Naive thymus-derived CD4-positive, alpha-beta T cell (primary cell): ENCODE measurements at regions of chr7 and their contacts with region 1.

Region 1: GRCh38 chr7:142323706-142324105 is 65.8 kb upstream of the PRSS58 start:
- DNase-seq: peak in 5 of 9 donors; percentile 25 to 44 (median 41)
- ATAC-seq: peak; percentile 40
- H3K4me3 ChIP-seq: no peak overlapping the region
- H3K4me3 Mint-ChIP-seq: peak overlapping the region in 7 of 10 donors; percentile 4 to 65 (median 54)
- H3K27ac ChIP-seq: peak overlapping the region; percentile 34
- H3K27ac Mint-ChIP-seq: peak overlapping the region; percentile 17 to 96 (median 80)
- H3K4me1 ChIP-seq: peaks cover 0 to 24% of the 10 kb centered on the region in 2 donors
- H3K4me1 Mint-ChIP-seq: peaks cover 5 to 51% (median 34%) of the 10 kb centered on the region in 7 donors
- H3K27me3 ChIP-seq: no peaks in the 10 kb centered on the region
- H3K27me3 Mint-ChIP-seq: peaks cover 0 to 23% (median 4%) of the 10 kb centered on the region in 5 donors

Region 2: DNA sequence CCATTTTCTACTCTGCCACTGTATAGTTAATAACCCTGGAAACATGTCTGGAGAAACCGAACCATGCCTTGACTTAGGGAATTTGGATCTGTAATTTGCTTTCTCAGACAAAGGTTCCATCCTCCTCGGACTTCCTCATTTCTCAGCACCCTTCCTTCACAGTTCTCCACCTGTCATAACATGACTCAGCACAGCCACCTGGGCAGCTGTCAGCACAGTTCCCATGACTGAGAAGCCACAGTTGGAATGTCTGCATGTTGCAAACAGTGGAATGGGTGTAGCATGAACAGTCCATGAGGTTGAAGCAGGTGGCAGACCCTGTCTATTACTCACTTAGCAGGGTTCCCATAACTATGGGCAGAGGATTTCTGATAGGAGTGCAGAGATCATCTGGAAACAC is 408.1 kb before region 1 on chr7:
- CTCF ChIA-PET with region 1: no interaction called
- POLR2A ChIA-PET with region 1: no interaction called
- intact Hi-C with region 1: no loop called
- DNase-seq: no peak
- ATAC-seq: no peak
- H3K4me3 ChIP-seq: no peak overlapping the region
- H3K4me3 Mint-ChIP-seq: no peak overlapping the region
- H3K27ac ChIP-seq: no peak overlapping the region
- H3K27ac Mint-ChIP-seq: no peak overlapping the region
- H3K4me1 ChIP-seq: no peaks in the 10 kb centered on the region
- H3K4me1 Mint-ChIP-seq: peaks cover 0 to 4% (median 0%) of the 10 kb centered on the region in 7 donors
- H3K27me3 ChIP-seq: no peaks in the 10 kb centered on the region
- H3K27me3 Mint-ChIP-seq: peaks cover 0 to 18% (median 14%) of the 10 kb centered on the region in 5 donors

Region 3: DNA sequence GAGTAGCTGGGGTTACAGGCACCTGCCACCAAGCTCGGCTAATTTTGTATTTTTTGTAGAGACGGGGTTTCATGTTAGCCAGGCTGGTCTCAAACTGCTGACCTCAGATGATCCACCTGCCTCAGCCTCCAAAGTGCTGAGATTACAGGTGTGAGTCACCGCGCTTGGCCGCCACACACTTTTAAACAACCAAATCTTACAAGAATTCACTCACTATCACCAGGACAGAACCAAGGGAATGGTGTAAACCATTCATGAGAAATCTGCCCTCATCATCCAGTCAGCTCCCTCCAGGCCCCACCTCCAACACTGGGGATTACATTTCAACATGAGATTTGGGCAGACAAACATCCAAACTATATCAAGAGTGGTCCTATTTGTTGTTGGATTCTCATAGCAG is 284.5 kb before region 1 on chr7:
- CTCF ChIA-PET with region 1: no interaction called
- POLR2A ChIA-PET with region 1: no interaction called
- intact Hi-C with region 1: no loop called
- DNase-seq: no peak
- ATAC-seq: no peak
- H3K4me3 ChIP-seq: no peak overlapping the region
- H3K4me3 Mint-ChIP-seq: no peak overlapping the region
- H3K27ac ChIP-seq: no peak overlapping the region
- H3K27ac Mint-ChIP-seq: no peak overlapping the region
- H3K4me1 ChIP-seq: no peaks in the 10 kb centered on the region
- H3K4me1 Mint-ChIP-seq: no peaks in the 10 kb centered on the region
- H3K27me3 ChIP-seq: no peaks in the 10 kb centered on the region
- H3K27me3 Mint-ChIP-seq: peaks cover 0 to 19% (median 16%) of the 10 kb centered on the region in 5 donors

Region 4: DNA sequence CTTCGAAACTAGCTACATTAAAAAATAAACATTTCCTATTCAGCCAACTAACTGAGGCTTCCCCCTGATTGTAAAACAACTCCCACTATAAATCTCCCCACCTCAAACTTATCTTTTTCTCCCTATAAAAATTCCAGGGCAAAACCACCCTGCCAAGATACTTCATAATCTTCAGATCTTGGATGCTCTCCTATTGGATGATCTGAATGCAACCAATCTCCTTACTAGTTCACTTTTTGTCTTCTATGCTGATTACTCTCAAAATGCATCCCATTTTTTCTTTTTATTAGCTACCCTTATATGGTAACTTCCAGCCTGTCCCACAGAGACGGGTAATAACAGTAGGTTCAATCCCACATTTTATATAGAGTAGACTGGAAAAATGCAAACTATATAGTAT is 50.9 kb before region 1 on chr7:
- CTCF ChIA-PET with region 1: no interaction called
- POLR2A ChIA-PET with region 1: no interaction called
- intact Hi-C with region 1: no loop called
- DNase-seq: no peak
- ATAC-seq: no peak
- H3K4me3 ChIP-seq: no peak overlapping the region
- H3K4me3 Mint-ChIP-seq: no peak overlapping the region
- H3K27ac ChIP-seq: no peak overlapping the region
- H3K27ac Mint-ChIP-seq: no peak overlapping the region
- H3K4me1 ChIP-seq: no peaks in the 10 kb centered on the region
- H3K4me1 Mint-ChIP-seq: no peaks in the 10 kb centered on the region
- H3K27me3 ChIP-seq: peaks cover 0 to 5% of the 10 kb centered on the region in 2 donors
- H3K27me3 Mint-ChIP-seq: peaks cover 28 to 57% (median 35%) of the 10 kb centered on the region in 5 donors

Region 5: GRCh38 chr7:142352543-142352942 is 28.8 kb after region 1 on chr7:
- CTCF ChIA-PET with region 1: interaction called, 9 read pairs
- POLR2A ChIA-PET with region 1: interaction called, 11 read pairs
- intact Hi-C with region 1: loop called (anchors 1 to 2 kb)
- DNase-seq: peak in 1 of 9 donors; percentile 17
- ATAC-seq: peak; percentile 64
- H3K4me3 ChIP-seq: peak overlapping the region; percentile 37
- H3K4me3 Mint-ChIP-seq: peak overlapping the region; percentile 38 to 85 (median 74)
- H3K27ac ChIP-seq: peak overlapping the region; percentile 64
- H3K27ac Mint-ChIP-seq: peak overlapping the region; percentile 13 to 90 (median 82)
- H3K4me1 ChIP-seq: peaks cover 3 to 23% of the 10 kb centered on the region in 2 donors
- H3K4me1 Mint-ChIP-seq: peaks cover 12 to 53% (median 42%) of the 10 kb centered on the region in 7 donors
- H3K27me3 ChIP-seq: no peaks in the 10 kb centered on the region
- H3K27me3 Mint-ChIP-seq: peaks cover 0 to 13% (median 0%) of the 10 kb centered on the region in 5 donors

Region 6: GRCh38 chr7:142385491-142386340 is 62.0 kb after region 1 on chr7:
- CTCF ChIA-PET with region 1: no interaction called
- POLR2A ChIA-PET with region 1: no interaction called
- intact Hi-C with region 1: loop called in 1 of 2 experiments (anchors 2 kb)
- DNase-seq: peak in 5 of 9 donors; percentile 31 to 45 (median 39)
- ATAC-seq: peak; percentile 80
- H3K4me3 ChIP-seq: no peak overlapping the region
- H3K4me3 Mint-ChIP-seq: peak overlapping the region in 8 of 10 donors; percentile 1 to 75 (median 26)
- H3K27ac ChIP-seq: no peak overlapping the region
- H3K27ac Mint-ChIP-seq: peak overlapping the region in 3 of 9 donors; percentile 61 to 67 (median 63)
- H3K4me1 ChIP-seq: peaks cover 0 to 16% of the 10 kb centered on the region in 2 donors
- H3K4me1 Mint-ChIP-seq: peaks cover 22 to 38% (median 29%) of the 10 kb centered on the region in 7 donors
- H3K27me3 ChIP-seq: no peaks in the 10 kb centered on the region
- H3K27me3 Mint-ChIP-seq: no peaks in the 10 kb centered on the region

Region 7: GRCh38 chr7:142833174-142834048 is 509.7 kb after region 1 on chr7:
- CTCF ChIA-PET with region 1: no interaction called
- POLR2A ChIA-PET with region 1: no interaction called
- intact Hi-C with region 1: no loop called
- DNase-seq: no peak
- ATAC-seq: peak; percentile 31
- H3K4me3 ChIP-seq: no peak overlapping the region
- H3K4me3 Mint-ChIP-seq: no peak overlapping the region
- H3K27ac ChIP-seq: no peak overlapping the region
- H3K27ac Mint-ChIP-seq: peak overlapping the region in 5 of 9 donors; percentile 8 to 57 (median 32)
- H3K4me1 ChIP-seq: no peaks in the 10 kb centered on the region
- H3K4me1 Mint-ChIP-seq: peaks cover 2 to 34% (median 16%) of the 10 kb centered on the region in 7 donors
- H3K27me3 ChIP-seq: no peaks in the 10 kb centered on the region
- H3K27me3 Mint-ChIP-seq: peaks cover 0 to 6% (median 0%) of the 10 kb centered on the region in 5 donors

Region 8: DNA sequence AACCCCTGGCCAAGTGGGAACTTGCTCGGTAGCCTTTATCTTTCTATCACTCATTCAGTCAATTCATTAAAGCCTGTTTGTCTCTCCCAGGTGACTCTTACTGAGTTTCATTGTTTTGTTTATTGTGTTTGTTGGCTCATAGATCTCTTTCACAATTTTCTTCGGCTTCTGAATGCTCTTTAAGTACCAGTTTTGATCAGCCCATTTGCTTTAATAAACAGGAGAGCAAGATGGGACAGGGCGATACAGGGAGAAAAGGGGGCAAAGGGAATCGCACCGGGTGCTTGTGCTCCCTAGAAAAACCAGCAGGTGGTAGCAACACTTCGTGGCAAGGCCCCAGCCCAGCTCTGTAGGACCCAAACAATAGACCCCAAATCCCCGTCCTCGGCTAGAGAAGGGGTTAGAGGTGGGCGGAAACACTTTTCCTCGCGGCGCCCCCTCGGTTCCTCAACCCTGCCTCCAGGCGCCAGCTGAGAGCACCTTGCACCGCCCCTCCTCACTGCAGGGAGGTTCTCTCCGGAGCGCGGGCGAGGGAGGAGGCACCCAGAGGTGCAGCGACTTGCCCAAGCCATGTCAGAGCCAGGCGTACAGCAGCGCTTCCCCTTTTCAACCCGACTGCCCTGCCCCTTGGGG is 530.1 kb after region 1 on chr7:
- CTCF ChIA-PET with region 1: no interaction called
- POLR2A ChIA-PET with region 1: interaction called, 3 read pairs
- intact Hi-C with region 1: loop called in 1 of 2 experiments (anchors 5 kb)
- DNase-seq: peak; percentile 56 to 74 (median 68)
- ATAC-seq: peak; percentile 88
- H3K4me3 ChIP-seq: peak overlapping the region; percentile 85
- H3K4me3 Mint-ChIP-seq: peak overlapping the region; percentile 90 to 99 (median 97)
- H3K27ac ChIP-seq: peak overlapping the region; percentile 69
- H3K27ac Mint-ChIP-seq: peak overlapping the region; percentile 37 to 92 (median 89)
- H3K4me1 ChIP-seq: peaks cover 4 to 12% of the 10 kb centered on the region in 2 donors
- H3K4me1 Mint-ChIP-seq: peaks cover 17 to 61% (median 39%) of the 10 kb centered on the region in 7 donors
- H3K27me3 ChIP-seq: no peaks in the 10 kb centered on the region
- H3K27me3 Mint-ChIP-seq: peaks cover 0 to 30% (median 0%) of the 10 kb centered on the region in 5 donors